A549 (cell line): ENCODE measurements at regions of chr15 and their contacts with region 1.

Region 1: GRCh38 chr15:74156678-74157411 is 16.7 kb upstream of the ISLR start:
- DNase-seq: no peak
- ATAC-seq: no peak
- H3K4me3 ChIP-seq: no peak overlapping the region
- H3K27ac ChIP-seq: no peak overlapping the region
- H3K4me1 ChIP-seq: peaks cover 9% of the 10 kb centered on the region; the same call in 1 of the 3 replicates
- CTCF ChIP-seq: no peak
- EP300 ChIP-seq: no peak
- POLR2A ChIP-seq: no peak
- RAD21 ChIP-seq: no peak

Region 2: DNA sequence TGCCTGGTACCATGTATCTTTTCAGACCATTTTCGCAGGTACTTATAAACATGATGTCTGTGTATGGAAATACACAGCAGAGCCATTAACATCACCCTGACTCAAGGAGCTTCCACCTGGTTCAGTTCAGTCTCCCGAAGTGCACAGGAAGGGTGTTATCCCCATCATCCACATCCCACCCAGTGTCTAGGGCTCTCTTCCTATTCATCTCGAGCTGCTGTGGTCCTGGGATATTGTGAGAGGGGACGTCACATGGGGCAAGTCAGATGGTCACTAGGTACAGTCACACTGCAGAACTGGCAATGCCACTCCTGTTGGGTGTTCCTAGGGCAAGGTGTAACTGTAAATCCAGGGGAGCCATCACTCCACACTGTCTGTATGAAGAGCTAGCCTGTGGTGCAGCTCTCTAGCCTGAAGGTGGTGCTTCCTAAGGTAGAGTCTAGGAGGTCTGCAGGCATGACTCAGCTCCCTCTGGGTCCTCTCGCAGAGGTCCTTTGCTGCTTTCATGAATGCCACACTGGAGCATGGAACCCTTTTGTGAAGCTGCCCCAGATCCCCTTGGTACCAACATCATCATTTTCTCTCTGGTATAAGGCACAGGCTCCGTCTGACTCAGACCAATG is 12.6 kb before region 1 on chr15:
- CTCF ChIA-PET with region 1: interaction called, 11 read pairs
- POLR2A ChIA-PET with region 1: no interaction called
- DNase-seq: peak; percentile 46 to 68
- ATAC-seq: peak; percentile 100
- H3K4me3 ChIP-seq: no peak overlapping the region
- H3K27ac ChIP-seq: peak overlapping the region; percentile 24 to 75; a peak in 3 of 6 replicates
- H3K4me1 ChIP-seq: peaks cover 11% of the 10 kb centered on the region; the same call in 2 of the 3 replicates
- CTCF ChIP-seq: no peak
- EP300 ChIP-seq: no peak
- POLR2A ChIP-seq: no peak
- RAD21 ChIP-seq: peak in 1 of 2 experiments; percentile 11; a peak in 1 of 5 replicates